H1 (cell line): ENCODE measurements at regions of chr5 and their contacts with region 1.

Region 1: GRCh38 chr5:100535060-100536005 is at the start of gene FAM174A:
- DNase-seq: peak; percentile 90 to 94
- H3K4me3 ChIP-seq: peak within 1 kb of the TSS; percentile 76 to 88 (median 80)
- H3K27ac ChIP-seq: peak within 1 kb of the TSS; percentile 67
- H3K4me1 ChIP-seq: 0 out of 7 replicates have a peak, but pooled peaks cover 0 to 2% (median 0%) of the 10 kb centered on the region in 4 experiments
- H3K27me3 ChIP-seq: no peaks in the 10 kb centered on the region
- CTCF ChIP-seq: no peak
- EP300 ChIP-seq: no peak
- POLR2A ChIP-seq: peak; percentile 67 to 76; a peak in 2 of 3 replicates
- RAD21 ChIP-seq: no peak
- total RNA-seq, gene FAM174A: 3.6 and 3.9 TPM in 2 replicates

Region 2: DNA sequence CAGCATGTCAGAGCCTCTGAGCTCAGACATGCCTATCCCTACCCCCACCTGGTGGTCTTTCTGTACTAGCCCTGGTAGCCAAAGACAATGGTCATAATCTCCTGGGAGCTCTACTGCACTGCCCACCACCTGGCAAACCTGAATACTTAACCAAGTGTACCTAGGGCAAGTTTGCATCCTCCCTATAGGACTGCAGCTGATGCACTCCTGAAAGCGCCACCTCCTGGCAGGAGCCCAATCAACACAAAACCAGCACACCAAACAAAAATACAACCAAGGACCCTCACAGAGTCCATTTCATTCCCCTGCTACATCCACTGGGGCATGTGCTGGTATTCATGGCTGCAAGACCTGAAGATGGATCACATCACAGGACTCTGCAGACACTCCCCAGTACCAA is 15.0 kb before region 1 on chr5:
- CTCF ChIA-PET with region 1: interaction called, 27 read pairs
- POLR2A ChIA-PET with region 1: no interaction called
- DNase-seq: peak in 1 of 2 experiments; percentile 76
- H3K4me3 ChIP-seq: no peak overlapping the region
- H3K27ac ChIP-seq: no peak overlapping the region
- H3K4me1 ChIP-seq: no peaks in the 10 kb centered on the region; a peak in 2 of 7 replicates
- H3K27me3 ChIP-seq: no peaks in the 10 kb centered on the region
- CTCF ChIP-seq: peak; percentile 60 to 79 (median 60)
- EP300 ChIP-seq: no peak
- POLR2A ChIP-seq: no peak
- RAD21 ChIP-seq: peak; percentile 47 to 60